ENCODE measurements at regions of chr9 and their contacts with region 1.

Region 1: GRCh38 chr9:34591248-34591916 is 1.9 kb upstream of the CNTFR start:
- DNase-seq: peak; percentile 68
- H3K4me3 Mint-ChIP-seq: no peak overlapping the region
- H3K27ac Mint-ChIP-seq: no peak overlapping the region
- H3K4me1 Mint-ChIP-seq: peaks cover 20% of the 10 kb centered on the region
- H3K27me3 Mint-ChIP-seq: peaks cover 59% of the 10 kb centered on the region
- CTCF ChIP-seq: peak; percentile 94

Region 2: DNA sequence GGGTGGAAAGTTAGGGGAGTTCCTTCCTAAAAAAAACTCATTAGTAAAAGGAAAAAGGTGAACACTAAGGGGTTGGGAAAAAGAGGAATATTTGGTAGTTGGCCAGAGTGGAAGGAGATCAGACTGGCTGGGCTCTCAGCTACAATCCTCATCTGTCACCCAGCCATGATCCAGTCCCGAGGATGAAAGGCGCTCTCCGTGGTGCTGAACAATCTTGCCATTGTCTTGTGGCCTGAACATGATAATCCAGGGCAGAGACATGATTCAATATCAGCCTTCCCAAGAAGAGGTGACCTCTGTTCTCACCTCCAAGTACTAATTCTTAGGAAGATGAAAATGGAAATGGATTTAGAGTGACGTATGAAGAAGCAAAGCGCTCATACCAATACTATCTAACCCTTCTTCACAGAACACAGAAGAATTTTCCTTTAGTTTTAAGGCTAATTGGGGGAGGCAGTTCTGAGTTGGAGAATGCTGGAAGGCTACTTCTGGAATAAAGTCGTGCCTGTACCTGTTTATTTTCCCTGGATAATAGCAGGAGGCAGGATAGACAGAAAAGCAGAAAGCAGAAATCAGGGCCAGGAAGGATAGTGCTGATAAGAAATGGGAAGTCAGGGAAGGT is 178.0 kb before region 1 on chr9:
- CTCF ChIA-PET with region 1: interaction called, 15 read pairs
- POLR2A ChIA-PET with region 1: no interaction called
- intact Hi-C with region 1: no loop called
- DNase-seq: peak; percentile 74
- H3K4me3 Mint-ChIP-seq: no peak overlapping the region
- H3K27ac Mint-ChIP-seq: no peak overlapping the region
- H3K4me1 Mint-ChIP-seq: no peaks in the 10 kb centered on the region
- H3K27me3 Mint-ChIP-seq: no peaks in the 10 kb centered on the region
- CTCF ChIP-seq: no peak

Region 3: GRCh38 chr9:34546834-34547827 is 44.3 kb before region 1 on chr9:
- CTCF ChIA-PET with region 1: interaction called, 37 read pairs
- POLR2A ChIA-PET with region 1: no interaction called
- intact Hi-C with region 1: loop called (anchors 1 kb)
- DNase-seq: peak; percentile 58
- H3K4me3 Mint-ChIP-seq: no peak overlapping the region
- H3K27ac Mint-ChIP-seq: no peak overlapping the region
- H3K4me1 Mint-ChIP-seq: no peaks in the 10 kb centered on the region
- H3K27me3 Mint-ChIP-seq: peaks cover 16% of the 10 kb centered on the region
- CTCF ChIP-seq: peak; percentile 67

Region 4: GRCh38 chr9:34570376-34570775 is 21.0 kb before region 1 on chr9:
- CTCF ChIA-PET with region 1: interaction called, 22 read pairs
- POLR2A ChIA-PET with region 1: no interaction called
- intact Hi-C with region 1: no loop called
- DNase-seq: no peak
- H3K4me3 Mint-ChIP-seq: no peak overlapping the region
- H3K27ac Mint-ChIP-seq: no peak overlapping the region
- H3K4me1 Mint-ChIP-seq: no peaks in the 10 kb centered on the region
- H3K27me3 Mint-ChIP-seq: peaks cover 18% of the 10 kb centered on the region
- CTCF ChIP-seq: no peak

Region 5: GRCh38 chr9:34603610-34604231 is 12.3 kb after region 1 on chr9:
- CTCF ChIA-PET with region 1: interaction called, 14 read pairs
- POLR2A ChIA-PET with region 1: interaction called, 3 read pairs
- intact Hi-C with region 1: no loop called
- DNase-seq: peak; percentile 82
- H3K4me3 Mint-ChIP-seq: no peak overlapping the region
- H3K27ac Mint-ChIP-seq: no peak overlapping the region
- H3K4me1 Mint-ChIP-seq: peaks cover 9% of the 10 kb centered on the region
- H3K27me3 Mint-ChIP-seq: no peaks in the 10 kb centered on the region
- CTCF ChIP-seq: peak; percentile 77

Region 6: DNA sequence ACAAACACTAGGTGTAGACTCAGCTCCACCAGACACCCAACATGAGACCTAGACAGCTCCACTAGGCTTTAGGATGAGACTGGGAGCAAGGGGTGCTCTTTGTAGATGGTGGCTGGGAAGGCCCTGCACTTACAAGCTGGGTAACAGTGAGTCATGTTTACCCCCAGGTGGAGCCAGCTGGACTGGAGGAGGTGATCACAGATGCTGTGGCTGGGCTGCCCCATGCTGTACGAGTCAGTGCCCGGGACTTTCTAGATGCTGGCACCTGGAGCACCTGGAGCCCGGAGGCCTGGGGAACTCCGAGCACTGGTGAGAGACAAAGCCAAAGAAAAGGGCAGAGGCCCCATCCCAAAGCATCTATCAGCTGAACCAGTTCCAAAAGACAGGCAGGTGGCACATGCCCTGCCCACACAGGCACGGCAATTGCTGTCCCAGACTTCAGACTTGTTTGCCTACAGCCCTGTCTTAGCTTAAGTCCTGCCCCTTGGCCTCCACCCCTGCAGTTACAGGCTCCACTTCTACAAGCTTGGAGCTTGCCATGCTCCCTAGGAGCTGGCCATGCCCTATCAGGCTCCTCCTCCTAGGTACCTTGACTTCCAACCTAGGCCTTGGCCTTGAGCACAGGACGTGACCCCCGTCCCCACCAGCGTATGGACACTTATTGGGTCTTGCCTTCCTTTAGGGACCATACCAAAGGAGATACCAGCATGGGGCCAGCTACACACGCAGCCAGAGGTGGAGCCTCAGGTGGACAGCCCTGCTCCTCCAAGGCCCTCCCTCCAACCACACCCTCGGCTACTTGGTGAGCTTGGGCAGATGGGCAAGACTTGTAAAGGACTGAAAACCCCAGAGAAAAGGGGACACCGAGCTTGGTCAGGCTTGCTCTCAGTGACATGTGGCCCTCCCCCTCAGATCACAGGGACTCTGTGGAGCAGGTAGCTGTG is 68.5 kb after region 1 on chr9:
- CTCF ChIA-PET with region 1: no interaction called
- POLR2A ChIA-PET with region 1: no interaction called
- intact Hi-C with region 1: no loop called
- DNase-seq: peak; percentile 46
- H3K4me3 Mint-ChIP-seq: no peak overlapping the region
- H3K27ac Mint-ChIP-seq: no peak overlapping the region
- H3K4me1 Mint-ChIP-seq: peaks cover 16% of the 10 kb centered on the region
- H3K27me3 Mint-ChIP-seq: no peaks in the 10 kb centered on the region
- CTCF ChIP-seq: no peak

Region 7: DNA sequence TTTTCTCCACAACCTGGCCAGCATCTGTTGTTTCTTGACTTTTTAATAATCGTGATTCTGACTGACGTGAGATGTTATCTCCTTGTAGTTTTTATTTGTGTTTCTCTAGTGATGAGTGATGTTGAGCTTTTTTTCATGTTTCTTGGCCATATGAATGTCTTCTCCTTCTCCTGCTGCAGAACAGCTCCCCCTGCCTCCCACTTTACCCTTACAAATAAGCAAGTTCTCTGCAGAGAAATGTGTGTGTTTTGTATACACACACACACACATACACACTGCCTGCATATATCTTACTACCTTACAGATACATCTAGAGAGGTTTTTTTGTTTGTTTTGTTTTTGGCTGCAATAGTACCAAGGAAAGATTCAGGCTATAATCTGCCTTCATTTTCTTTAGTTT is 278.0 kb after region 1 on chr9:
- CTCF ChIA-PET with region 1: no interaction called
- POLR2A ChIA-PET with region 1: no interaction called
- intact Hi-C with region 1: no loop called
- DNase-seq: peak; percentile 47
- H3K4me3 Mint-ChIP-seq: no peak overlapping the region
- H3K27ac Mint-ChIP-seq: no peak overlapping the region
- H3K4me1 Mint-ChIP-seq: no peaks in the 10 kb centered on the region
- H3K27me3 Mint-ChIP-seq: peaks cover 43% of the 10 kb centered on the region
- CTCF ChIP-seq: peak; percentile 22